Activated CD4-positive, alpha-beta memory T cell treated with anti-CD3 and anti-CD28 coated beads for 36 hours (primary cell): ENCODE measurements at regions of chr1 and their contacts with region 1.

Region 1: GRCh38 chr1:89358287-89358893 is 5.5 kb upstream of the GBP6 start:
- DNase-seq: peak; percentile 86
- H3K4me3 Mint-ChIP-seq: peak overlapping the region; percentile 68
- H3K27ac Mint-ChIP-seq: peak overlapping the region; percentile 72
- H3K4me1 Mint-ChIP-seq: peaks cover 41% of the 10 kb centered on the region
- H3K27me3 Mint-ChIP-seq: no peaks in the 10 kb centered on the region

Region 2: GRCh38 chr1:89041119-89041641 is 317.2 kb before region 1 on chr1:
- CTCF ChIA-PET with region 1: interaction called, 3 read pairs
- POLR2A ChIA-PET with region 1: no interaction called
- intact Hi-C with region 1: loop called (anchors 1 kb)
- DNase-seq: peak; percentile 66
- H3K4me3 Mint-ChIP-seq: no peak overlapping the region
- H3K27ac Mint-ChIP-seq: peak overlapping the region; percentile 70
- H3K4me1 Mint-ChIP-seq: peaks cover 41% of the 10 kb centered on the region
- H3K27me3 Mint-ChIP-seq: peaks cover 13% of the 10 kb centered on the region

Region 3: GRCh38 chr1:89259283-89259971 is 99.0 kb before region 1 on chr1:
- CTCF ChIA-PET with region 1: interaction called, 11 read pairs
- POLR2A ChIA-PET with region 1: no interaction called
- intact Hi-C with region 1: no loop called
- DNase-seq: peak; percentile 76
- H3K4me3 Mint-ChIP-seq: peak overlapping the region; percentile 60
- H3K27ac Mint-ChIP-seq: peak overlapping the region; percentile 86
- H3K4me1 Mint-ChIP-seq: peaks cover 65% of the 10 kb centered on the region
- H3K27me3 Mint-ChIP-seq: no peaks in the 10 kb centered on the region

Region 4: DNA sequence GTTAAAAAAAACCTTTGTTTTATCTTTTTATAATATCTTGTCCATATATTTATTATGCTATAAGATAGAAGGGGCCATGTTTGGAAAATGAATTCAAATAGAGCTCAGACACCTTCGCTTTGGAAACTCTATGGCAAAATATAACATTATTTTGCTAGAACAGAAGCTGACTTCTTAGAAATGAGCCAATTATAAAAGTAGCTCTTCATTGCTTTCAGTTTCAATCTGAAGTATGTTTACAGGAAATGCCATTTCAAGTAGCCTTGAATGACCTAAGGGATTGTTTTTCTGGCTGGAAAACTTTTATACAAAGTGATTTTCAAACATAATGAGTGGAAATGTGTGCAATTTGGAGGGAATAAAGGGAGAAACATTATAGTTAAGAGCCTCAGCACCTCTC is 47.9 kb before region 1 on chr1:
- CTCF ChIA-PET with region 1: interaction called, 7 read pairs
- POLR2A ChIA-PET with region 1: no interaction called
- intact Hi-C with region 1: loop called (anchors 2 kb)
- DNase-seq: no peak
- H3K4me3 Mint-ChIP-seq: peak overlapping the region; percentile 14
- H3K27ac Mint-ChIP-seq: peak overlapping the region; percentile 85
- H3K4me1 Mint-ChIP-seq: peaks cover 45% of the 10 kb centered on the region
- H3K27me3 Mint-ChIP-seq: no peaks in the 10 kb centered on the region